ENCODE measurements at regions of chr11 and their contacts with region 1.

Region 1: DNA sequence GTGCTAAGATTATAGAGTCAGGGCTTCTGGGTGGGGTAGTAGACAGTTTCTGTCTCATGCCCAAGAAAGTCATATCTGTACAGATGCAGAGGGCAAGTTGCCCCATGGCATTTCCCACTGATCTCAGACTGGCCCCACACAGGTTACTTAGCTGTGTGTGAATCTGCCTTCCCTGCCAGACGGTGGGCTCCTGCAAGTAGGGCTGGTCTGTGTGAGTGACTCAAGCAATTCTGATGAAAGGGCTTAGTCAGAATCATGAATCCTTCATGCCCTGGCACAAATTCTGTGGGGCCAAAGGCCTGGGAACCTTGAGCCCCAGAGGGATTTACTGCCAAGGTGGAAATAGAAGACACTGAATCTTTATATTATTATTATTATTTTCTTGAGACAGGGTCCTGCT is 30.4 kb downstream of the USH1C start:
- DNase-seq: no peak
- H3K4me3 ChIP-seq: no peak overlapping the region
- CTCF ChIP-seq: no peak

Region 2: GRCh38 chr11:17171916-17172315 is 341.9 kb before region 1 on chr11:
- CTCF ChIA-PET with region 1: no interaction called
- POLR2A ChIA-PET with region 1: no interaction called
- DNase-seq: no peak
- H3K4me3 ChIP-seq: no peak overlapping the region
- CTCF ChIP-seq: no peak

Region 3: DNA sequence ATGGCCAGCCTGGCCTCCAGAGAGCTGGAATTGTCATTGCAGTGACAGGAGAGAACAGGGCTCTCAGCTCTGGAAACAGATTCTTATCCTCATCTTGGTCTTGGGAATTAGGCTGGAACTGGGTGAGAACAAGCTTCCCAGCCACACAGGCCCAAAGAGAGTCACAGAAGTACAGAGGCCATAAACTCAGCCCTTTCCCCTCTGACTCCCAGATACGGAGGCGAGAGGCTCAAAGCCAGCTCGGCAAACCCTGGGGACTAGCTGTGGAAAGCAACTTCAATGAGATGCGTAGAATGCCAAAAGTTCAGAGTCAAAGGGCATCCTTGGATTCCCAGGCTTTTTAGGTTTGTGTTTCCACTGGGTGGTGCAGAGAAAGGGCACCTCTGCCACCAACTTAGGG is 22.9 kb before region 1 on chr11:
- CTCF ChIA-PET with region 1: no interaction called
- POLR2A ChIA-PET with region 1: no interaction called
- DNase-seq: no peak
- H3K4me3 ChIP-seq: no peak overlapping the region
- CTCF ChIP-seq: no peak

Region 4: GRCh38 chr11:17528181-17528691 is 14.4 kb after region 1 on chr11:
- CTCF ChIA-PET with region 1: interaction called, 19 read pairs
- POLR2A ChIA-PET with region 1: no interaction called
- DNase-seq: no peak
- H3K4me3 ChIP-seq: no peak overlapping the region
- CTCF ChIP-seq: peak; percentile 75